ENCODE measurements at regions of chr17 and their contacts with region 1.

Region 1: GRCh38 chr17:47840740-47841603 is at the start of gene SCRN2:
- DNase-seq: peak; percentile 93
- H3K4me3 Mint-ChIP-seq: peak within 1 kb of the TSS; percentile 100
- H3K27ac Mint-ChIP-seq: peak within 1 kb of the TSS; percentile 85
- H3K4me1 Mint-ChIP-seq: peaks cover 35% of the 10 kb centered on the region
- H3K27me3 Mint-ChIP-seq: peaks cover 13% of the 10 kb centered on the region
- total RNA-seq, gene SCRN2: 15.1 to 16.3 TPM

Region 2: GRCh38 chr17:47687748-47688147 is 153.2 kb before region 1 on chr17:
- CTCF ChIA-PET with region 1: no interaction called
- intact Hi-C with region 1: no loop called
- DNase-seq: no peak
- H3K4me3 Mint-ChIP-seq: no peak overlapping the region
- H3K27ac Mint-ChIP-seq: no peak overlapping the region
- H3K4me1 Mint-ChIP-seq: peaks cover 31% of the 10 kb centered on the region
- H3K27me3 Mint-ChIP-seq: no peaks in the 10 kb centered on the region

Region 3: DNA sequence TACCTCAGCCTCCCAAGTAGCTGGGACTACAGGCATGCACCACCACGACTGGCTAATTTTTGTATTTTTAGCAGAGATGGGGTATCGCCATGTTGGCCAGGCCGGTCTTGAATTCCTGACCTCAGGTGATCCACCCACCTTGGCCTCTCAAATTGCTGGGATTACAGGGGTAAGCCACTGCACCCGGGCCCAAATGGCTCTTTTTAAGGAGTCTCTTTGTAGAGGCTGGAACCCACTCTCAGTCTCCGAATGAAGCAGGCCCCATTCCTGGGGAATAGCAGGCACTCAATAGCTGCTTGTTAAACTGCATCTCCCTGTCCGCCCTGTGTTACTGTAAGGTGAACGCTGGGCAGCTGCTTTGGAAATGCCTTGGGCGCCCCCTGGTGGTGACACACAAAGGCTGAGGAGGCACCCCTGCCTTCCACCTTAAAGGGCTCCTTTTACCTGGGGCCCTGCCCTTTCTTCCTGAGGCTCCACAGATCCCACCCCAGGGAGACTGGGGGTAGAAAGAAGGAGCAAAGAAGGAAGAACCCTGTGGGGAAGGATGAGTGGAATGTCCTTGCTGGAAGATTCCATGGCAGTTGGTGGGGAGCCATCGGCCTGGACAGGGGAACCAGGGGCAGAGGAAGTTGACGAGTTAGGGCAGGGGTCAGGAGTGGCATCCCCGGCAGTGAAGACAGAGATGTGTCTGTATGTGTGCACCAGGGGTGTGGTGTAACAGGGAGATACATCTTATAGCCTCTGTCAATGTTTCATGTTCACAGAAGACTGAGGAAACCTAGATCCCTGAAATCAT is 49.0 kb after region 1 on chr17:
- CTCF ChIA-PET with region 1: interaction called, 460 read pairs
- intact Hi-C with region 1: loop called (anchors 1 kb)
- DNase-seq: peak; percentile 97
- H3K4me3 Mint-ChIP-seq: no peak overlapping the region
- H3K27ac Mint-ChIP-seq: no peak overlapping the region
- H3K4me1 Mint-ChIP-seq: peaks cover 24% of the 10 kb centered on the region
- H3K27me3 Mint-ChIP-seq: no peaks in the 10 kb centered on the region

Region 4: DNA sequence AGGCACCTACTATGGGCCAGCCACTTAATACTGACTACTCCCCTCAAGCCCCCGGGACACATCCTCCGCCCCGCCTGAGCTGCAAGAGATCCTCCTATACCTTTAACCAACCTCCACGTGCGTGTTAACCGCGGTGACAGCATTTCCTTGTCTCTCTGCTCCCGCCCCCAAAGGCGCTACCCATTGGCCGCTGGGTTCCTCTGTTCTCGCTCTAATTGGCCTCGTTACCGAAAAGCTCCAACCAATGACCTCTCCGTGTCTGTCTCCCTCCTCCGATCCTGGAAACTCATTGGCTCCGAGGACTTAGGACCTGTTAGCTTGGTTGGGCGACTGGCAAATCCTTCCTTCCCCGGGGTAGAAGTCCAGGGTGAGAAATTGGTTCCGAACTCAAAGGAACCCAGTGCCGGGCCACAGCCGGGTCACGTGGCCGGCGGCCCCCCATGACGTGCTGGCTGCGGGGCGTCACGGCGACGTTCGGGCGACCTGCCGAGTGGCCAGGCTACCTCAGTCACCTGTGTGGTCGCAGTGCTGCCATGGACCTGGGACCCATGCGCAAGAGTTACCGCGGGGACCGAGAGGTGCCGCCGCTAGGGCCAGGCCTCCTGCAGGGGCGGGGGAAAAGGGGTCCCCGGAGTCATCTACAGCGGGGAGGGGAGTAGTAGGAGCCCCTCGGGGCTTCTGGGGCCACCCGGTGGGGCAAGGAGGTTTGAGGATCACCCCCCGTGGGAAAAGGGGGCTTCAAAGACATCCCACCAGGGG is 100.4 kb after region 1 on chr17 and contains the start of gene PNPO:
- CTCF ChIA-PET with region 1: interaction called, 18 read pairs
- intact Hi-C with region 1: loop called (anchors 2 kb)
- DNase-seq: peak; percentile 98
- H3K4me3 Mint-ChIP-seq: peak within 1 kb of the TSS; percentile 85
- H3K27ac Mint-ChIP-seq: peak within 1 kb of the TSS; percentile 80
- H3K4me1 Mint-ChIP-seq: peaks cover 62% of the 10 kb centered on the region
- H3K27me3 Mint-ChIP-seq: no peaks in the 10 kb centered on the region
- total RNA-seq, gene PNPO: 35.5 to 37.0 TPM

Region 5: DNA sequence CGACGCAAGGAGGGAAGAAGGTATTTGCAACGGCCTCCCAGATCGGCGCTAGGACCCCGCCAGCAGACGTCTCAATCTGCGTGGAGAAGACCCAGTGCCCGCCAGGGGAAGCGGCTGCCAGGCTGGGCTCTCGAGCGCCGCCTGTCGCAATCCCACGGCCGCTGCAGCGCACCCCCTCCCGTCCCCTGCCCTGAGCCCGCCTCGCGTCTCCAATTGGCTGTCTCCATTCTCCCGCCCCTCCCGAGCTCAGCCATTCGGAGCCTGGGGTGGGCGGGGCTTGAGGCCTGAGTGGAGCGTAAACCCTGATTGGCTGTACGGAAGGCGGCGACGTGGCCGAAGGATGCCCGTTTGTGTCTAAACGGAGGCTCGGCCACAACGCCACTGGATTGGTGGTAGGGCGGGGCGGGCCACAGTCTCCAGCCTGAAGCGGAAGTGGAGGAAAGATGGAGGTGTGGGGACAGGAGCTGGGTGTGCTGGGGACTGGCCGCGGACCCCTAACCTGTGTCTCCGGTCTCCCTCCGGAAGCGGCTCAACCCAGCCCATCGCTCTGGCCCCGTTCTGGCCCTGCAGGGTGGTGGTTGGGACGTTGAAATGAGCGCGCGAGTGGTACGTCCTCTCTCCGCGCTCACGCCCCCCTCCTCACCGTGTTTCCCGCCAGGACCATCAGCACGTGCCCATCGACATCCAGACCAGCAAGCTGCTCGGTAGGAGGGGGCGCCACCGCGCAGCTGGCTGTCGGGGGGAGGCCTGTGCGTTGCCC is 129.9 kb after region 1 on chr17 and contains the start of gene CDK5RAP3:
- CTCF ChIA-PET with region 1: interaction called, 14 read pairs
- intact Hi-C with region 1: loop called (anchors 2 kb)
- DNase-seq: peak; percentile 100
- H3K4me3 Mint-ChIP-seq: peak within 1 kb of the TSS; percentile 95
- H3K27ac Mint-ChIP-seq: peak within 1 kb of the TSS; percentile 80
- H3K4me1 Mint-ChIP-seq: peaks cover 24% of the 10 kb centered on the region
- H3K27me3 Mint-ChIP-seq: no peaks in the 10 kb centered on the region
- total RNA-seq, gene CDK5RAP3: 174 to 175 TPM